Endothelial cell of umbilical vein (primary cell): ENCODE measurements at regions of chr3 and their contacts with region 1.

Region 1: GRCh38 chr3:141311496-141312353 is 56.6 kb upstream of the ZBTB38 start:
- DNase-seq: peak; percentile 97
- H3K4me3 ChIP-seq: peak overlapping the region; percentile 1 to 65 (median 49)
- H3K27ac ChIP-seq: peak overlapping the region; percentile 57
- H3K4me1 ChIP-seq: peaks cover 11% of the 10 kb centered on the region
- H3K27me3 ChIP-seq: no peaks in the 10 kb centered on the region
- CTCF ChIP-seq: peak; percentile 80 to 86
- POLR2A ChIP-seq: peak; percentile 76

Region 2: GRCh38 chr3:141231101-141231935 is 80.4 kb before region 1 on chr3 and contains the start of gene PXYLP1:
- CTCF ChIA-PET with region 1: interaction called, 11 read pairs
- POLR2A ChIA-PET with region 1: interaction called, 3 read pairs
- dilution Hi-C with region 1: no loop called
- intact Hi-C with region 1: no loop called
- DNase-seq: peak; percentile 83
- H3K4me3 ChIP-seq: peak within 1 kb of the TSS; percentile 65 to 75 (median 72)
- H3K27ac ChIP-seq: no peak within 1 kb of the TSS
- H3K4me1 ChIP-seq: peaks cover 8% of the 10 kb centered on the region
- H3K27me3 ChIP-seq: peaks cover 11 to 31% of the 10 kb centered on the region in 2 experiments
- CTCF ChIP-seq: peak; percentile 63 to 77
- POLR2A ChIP-seq: peak; percentile 61
- total RNA-seq, gene PXYLP1: 0.88 and 1.7 TPM in 2 replicates

Region 3: DNA sequence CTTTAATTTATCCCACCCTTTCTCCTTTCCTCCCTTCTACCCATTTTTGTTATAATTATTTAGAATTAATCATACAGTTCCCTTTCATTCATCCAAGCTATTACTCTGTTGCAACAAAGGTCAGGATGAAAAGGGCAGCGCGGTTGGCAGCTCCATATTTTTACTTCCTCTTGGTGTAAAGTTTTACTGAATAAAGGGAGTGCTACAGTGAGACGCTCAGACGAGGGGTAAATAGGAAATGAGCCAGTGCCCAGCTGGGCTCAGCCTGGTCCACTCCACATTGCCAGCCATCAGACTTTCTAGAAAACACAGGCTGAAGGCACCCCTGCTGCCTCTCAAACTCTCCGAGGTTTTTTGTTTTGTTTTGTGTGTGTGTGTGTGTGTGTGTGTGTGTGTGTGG is 34.7 kb after region 1 on chr3:
- CTCF ChIA-PET with region 1: interaction called, 10 read pairs
- POLR2A ChIA-PET with region 1: no interaction called
- dilution Hi-C with region 1: no loop called
- intact Hi-C with region 1: no loop called
- DNase-seq: peak; percentile 58
- H3K4me3 ChIP-seq: no peak overlapping the region
- H3K27ac ChIP-seq: no peak overlapping the region
- H3K4me1 ChIP-seq: peaks cover 12% of the 10 kb centered on the region
- H3K27me3 ChIP-seq: peaks cover 0 to 2% of the 10 kb centered on the region in 2 experiments
- CTCF ChIP-seq: no peak
- POLR2A ChIP-seq: no peak

Region 4: GRCh38 chr3:141402476-141403171 is 90.9 kb after region 1 on chr3:
- CTCF ChIA-PET with region 1: interaction called, 11 read pairs
- POLR2A ChIA-PET with region 1: no interaction called
- dilution Hi-C with region 1: no loop called
- intact Hi-C with region 1: loop called (anchors 1 kb)
- DNase-seq: peak; percentile 76
- H3K4me3 ChIP-seq: peak overlapping the region; percentile 8 to 86 (median 65)
- H3K27ac ChIP-seq: peak overlapping the region; percentile 97
- H3K4me1 ChIP-seq: peaks cover 47% of the 10 kb centered on the region
- H3K27me3 ChIP-seq: no peaks in the 10 kb centered on the region
- CTCF ChIP-seq: peak in 1 of 2 donors; percentile 2
- POLR2A ChIP-seq: peak; percentile 60

Region 5: GRCh38 chr3:141426404-141427034 is 114.8 kb after region 1 on chr3:
- CTCF ChIA-PET with region 1: interaction called, 16 read pairs
- POLR2A ChIA-PET with region 1: no interaction called
- dilution Hi-C with region 1: no loop called
- intact Hi-C with region 1: no loop called
- DNase-seq: peak; percentile 89
- H3K4me3 ChIP-seq: no peak overlapping the region
- H3K27ac ChIP-seq: peak overlapping the region; percentile 44
- H3K4me1 ChIP-seq: peaks cover 16% of the 10 kb centered on the region
- H3K27me3 ChIP-seq: no peaks in the 10 kb centered on the region
- CTCF ChIP-seq: no peak
- POLR2A ChIP-seq: no peak

Region 6: DNA sequence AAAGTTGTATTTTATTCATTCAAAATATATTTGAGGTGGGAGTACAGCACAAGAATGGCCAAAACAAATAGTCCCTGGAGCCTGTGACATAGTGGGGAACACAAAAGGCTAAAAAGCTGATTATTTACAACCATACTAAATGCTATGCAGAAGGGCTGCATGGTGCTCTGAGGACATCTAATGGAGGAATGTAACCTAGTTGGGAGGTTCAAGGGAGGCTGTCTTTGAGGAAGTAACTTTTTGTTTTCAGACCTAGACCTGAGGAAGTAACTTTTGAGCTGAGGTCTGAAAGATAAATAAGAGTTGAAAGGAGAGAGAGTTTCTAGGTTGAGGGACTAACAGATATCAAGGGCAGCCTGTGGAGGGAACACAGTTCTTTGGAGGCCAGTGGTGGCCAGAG is 140.3 kb after region 1 on chr3:
- CTCF ChIA-PET with region 1: interaction called, 351 read pairs
- POLR2A ChIA-PET with region 1: interaction called, 4 read pairs
- dilution Hi-C with region 1: no loop called
- intact Hi-C with region 1: loop called (anchors 1 kb)
- DNase-seq: peak; percentile 83
- H3K4me3 ChIP-seq: no peak overlapping the region
- H3K27ac ChIP-seq: no peak overlapping the region
- H3K4me1 ChIP-seq: peaks cover 12% of the 10 kb centered on the region
- H3K27me3 ChIP-seq: no peaks in the 10 kb centered on the region
- CTCF ChIP-seq: peak; percentile 59 to 62
- POLR2A ChIP-seq: no peak

Region 7: GRCh38 chr3:141561426-141562034 is 249.8 kb after region 1 on chr3:
- CTCF ChIA-PET with region 1: interaction called, 10 read pairs
- POLR2A ChIA-PET with region 1: no interaction called
- dilution Hi-C with region 1: no loop called
- intact Hi-C with region 1: loop called (anchors 2 kb)
- DNase-seq: peak; percentile 85
- H3K4me3 ChIP-seq: no peak overlapping the region
- H3K27ac ChIP-seq: no peak overlapping the region
- H3K4me1 ChIP-seq: peaks cover 15% of the 10 kb centered on the region
- H3K27me3 ChIP-seq: no peaks in the 10 kb centered on the region
- CTCF ChIP-seq: peak; percentile 72 to 75
- POLR2A ChIP-seq: no peak